ENCODE measurements at regions of chr7 and their contacts with region 1.

Region 1: DNA sequence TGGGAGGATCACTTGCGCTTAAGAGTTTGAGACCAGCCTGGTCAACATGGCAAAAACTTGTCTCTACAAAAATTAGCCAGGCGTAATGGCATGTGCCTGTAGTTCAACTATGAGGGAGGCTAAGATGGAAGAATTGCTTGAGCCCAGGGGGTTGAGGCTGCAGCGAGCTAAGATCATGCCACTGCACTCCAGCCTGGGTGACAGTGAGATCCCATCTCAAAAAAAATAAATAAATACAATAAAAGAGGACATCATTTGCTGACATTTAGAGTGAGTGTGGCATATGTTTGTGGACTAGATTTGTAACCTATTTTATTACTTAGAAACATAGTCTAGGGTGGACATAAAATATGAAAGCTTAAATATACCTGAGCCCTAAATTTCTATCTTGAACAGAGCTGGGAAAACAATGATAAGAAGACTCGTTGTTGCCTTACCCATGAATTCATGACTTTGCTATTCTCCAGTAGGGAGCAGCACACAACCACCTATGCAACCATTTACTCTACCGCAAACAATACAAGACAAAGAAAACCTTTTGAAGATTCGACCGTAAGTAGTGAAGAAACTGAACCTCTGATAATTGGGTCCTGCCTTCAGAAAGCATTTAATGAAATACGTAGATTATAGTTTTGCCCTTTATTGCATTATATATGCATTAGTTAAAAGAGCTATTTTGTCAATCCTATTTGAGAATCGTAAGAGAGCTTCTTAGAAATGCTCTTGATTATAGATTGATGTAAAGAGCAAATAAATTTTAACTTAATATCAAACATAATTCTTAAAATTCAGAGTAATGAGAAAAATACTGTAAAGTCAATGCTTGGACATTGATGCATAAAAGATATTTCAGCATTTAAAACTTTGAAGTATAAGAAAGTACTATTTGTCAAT is 83.5 kb downstream of the GNAT3 start:
- DNase-seq: peak; percentile 81
- H3K4me3 ChIP-seq: no peak overlapping the region
- H3K27ac ChIP-seq: no peak overlapping the region
- H3K4me1 ChIP-seq: no peaks in the 10 kb centered on the region
- H3K27me3 ChIP-seq: peaks cover 7% of the 10 kb centered on the region
- CTCF ChIP-seq: peak; percentile 78

Region 2: DNA sequence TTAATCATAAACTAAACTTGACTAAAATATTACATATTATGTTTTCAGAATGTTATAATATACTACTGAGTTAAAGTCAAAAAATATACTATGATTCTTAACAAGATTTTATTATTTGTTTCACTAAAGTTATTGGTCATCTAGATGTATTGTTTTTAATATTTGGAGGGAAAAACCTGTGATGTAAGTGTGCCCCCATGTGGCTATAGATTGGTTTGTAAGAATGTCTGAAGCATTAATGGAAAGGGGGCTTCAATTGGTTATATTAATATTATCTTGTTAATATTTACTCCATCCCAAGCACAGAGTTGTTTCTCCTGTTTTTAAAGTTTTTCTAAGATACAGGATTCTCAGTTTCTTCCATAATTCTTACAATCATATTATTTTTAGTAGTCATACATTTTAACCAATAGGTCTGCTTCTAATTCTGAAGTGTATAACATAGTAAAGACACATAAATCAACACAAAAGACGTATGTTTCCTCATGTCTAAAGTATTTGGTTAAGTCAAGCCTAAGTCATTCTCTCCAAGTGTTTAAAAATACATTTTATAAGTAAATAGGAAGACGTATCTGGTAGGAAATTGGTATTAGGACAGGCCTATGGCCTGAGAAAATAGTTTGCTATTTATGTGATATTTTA is 25.4 kb after region 1 on chr7:
- CTCF ChIA-PET with region 1: no interaction called
- POLR2A ChIA-PET with region 1: no interaction called
- intact Hi-C with region 1: loop called (anchors 2 kb)
- DNase-seq: peak; percentile 58
- H3K4me3 ChIP-seq: no peak overlapping the region
- H3K27ac ChIP-seq: no peak overlapping the region
- H3K4me1 ChIP-seq: no peaks in the 10 kb centered on the region
- H3K27me3 ChIP-seq: no peaks in the 10 kb centered on the region
- CTCF ChIP-seq: peak; percentile 70

Region 3: DNA sequence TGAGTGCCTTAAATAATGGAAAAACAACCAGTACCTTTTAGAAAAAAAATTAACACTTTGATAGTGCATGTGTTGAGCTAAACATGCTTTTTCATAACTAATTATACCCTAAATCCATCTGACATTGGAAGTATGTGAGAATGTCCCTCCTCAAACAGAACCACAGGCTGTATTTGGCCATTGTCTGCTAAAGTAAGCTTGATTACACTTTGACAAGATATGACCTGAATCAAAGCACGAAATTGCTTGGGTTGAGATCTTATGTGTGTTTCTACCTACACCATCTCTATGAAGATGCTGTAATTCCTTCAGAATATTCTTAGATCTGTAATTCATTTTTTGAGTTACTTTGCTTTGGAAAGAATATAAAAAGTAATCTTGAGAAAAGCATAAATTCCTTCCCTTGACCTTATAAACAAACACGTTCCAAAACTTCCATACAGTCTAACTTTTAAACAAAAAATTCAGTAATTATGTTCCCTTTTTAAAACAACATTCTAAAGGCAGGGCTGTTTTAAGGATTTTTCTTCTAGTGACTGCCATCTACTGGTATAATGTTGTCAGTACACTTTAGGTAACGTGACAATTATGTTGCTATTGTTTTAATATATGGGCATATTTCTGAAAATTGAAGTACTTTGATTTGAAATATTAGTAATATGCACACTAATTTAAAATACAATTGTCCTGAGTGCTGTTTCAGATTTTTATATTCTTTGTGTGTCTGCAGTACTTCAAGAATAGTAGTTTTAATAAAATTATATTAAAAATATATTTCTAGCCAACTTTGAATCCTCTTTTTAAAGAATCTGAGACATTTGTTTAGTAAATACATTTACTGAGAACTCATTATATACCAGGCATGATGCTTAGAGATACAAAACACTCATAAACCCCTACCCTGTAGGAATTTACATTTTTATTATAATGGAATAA is 231.0 kb after region 1 on chr7:
- CTCF ChIA-PET with region 1: interaction called, 4 read pairs
- POLR2A ChIA-PET with region 1: no interaction called
- intact Hi-C with region 1: loop called (anchors 2 kb)
- DNase-seq: peak; percentile 45
- H3K4me3 ChIP-seq: no peak overlapping the region
- H3K27ac ChIP-seq: no peak overlapping the region
- H3K4me1 ChIP-seq: no peaks in the 10 kb centered on the region
- H3K27me3 ChIP-seq: no peaks in the 10 kb centered on the region
- CTCF ChIP-seq: peak; percentile 78

Region 4: GRCh38 chr7:80681272-80681885 is 253.0 kb after region 1 on chr7:
- CTCF ChIA-PET with region 1: interaction called, 4 read pairs
- POLR2A ChIA-PET with region 1: no interaction called
- intact Hi-C with region 1: loop called (anchors 5 kb)
- DNase-seq: peak; percentile 48
- H3K4me3 ChIP-seq: no peak overlapping the region
- H3K27ac ChIP-seq: no peak overlapping the region
- H3K4me1 ChIP-seq: no peaks in the 10 kb centered on the region
- H3K27me3 ChIP-seq: no peaks in the 10 kb centered on the region
- CTCF ChIP-seq: peak; percentile 59

Region 5: DNA sequence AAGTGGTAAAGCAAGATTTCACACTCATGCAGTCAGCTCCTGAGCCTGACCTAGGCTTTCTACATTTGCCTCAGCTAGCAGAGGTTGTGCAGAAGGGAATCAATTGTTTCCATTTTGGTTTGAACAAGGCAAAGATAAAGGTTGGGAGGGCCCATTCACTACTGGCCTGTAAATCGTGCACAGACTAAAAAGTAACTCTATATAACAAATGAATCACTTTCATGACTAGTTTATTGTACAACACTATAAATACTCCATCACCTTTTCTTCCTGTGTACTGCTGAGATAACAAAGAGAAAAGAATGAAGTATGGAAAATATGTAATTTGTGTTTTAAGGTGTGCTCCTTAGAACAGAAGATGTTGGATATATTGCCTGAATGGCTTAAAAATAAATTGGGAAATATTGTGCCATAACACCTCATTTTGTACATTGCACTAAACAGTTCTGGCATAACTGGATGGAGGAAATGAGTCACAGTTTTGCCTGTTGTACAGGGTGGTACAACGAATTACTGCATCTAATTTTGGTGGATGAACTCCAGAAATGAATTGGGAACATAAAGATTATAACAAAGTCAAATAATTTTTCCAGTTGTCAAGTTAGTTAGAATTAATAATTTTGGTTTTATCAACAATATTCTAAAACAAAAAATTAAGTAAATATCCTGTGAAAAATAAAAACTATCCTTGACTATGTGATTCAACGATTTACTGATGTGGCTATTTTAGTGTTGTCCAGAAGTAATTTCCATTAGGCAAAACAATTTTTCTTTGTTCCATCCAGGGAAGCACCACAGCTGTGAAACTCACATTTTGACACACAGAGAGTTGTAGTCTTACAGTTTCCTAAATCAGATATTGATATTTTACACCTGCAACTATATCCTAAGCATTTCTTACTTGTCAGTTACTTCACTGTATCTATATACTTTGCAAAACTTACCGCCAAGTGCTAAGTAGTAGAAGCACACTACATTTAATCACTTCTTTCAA is 472.5 kb after region 1 on chr7:
- CTCF ChIA-PET with region 1: no interaction called
- POLR2A ChIA-PET with region 1: no interaction called
- intact Hi-C with region 1: loop called (anchors 10 kb)
- DNase-seq: peak; percentile 60
- H3K4me3 ChIP-seq: no peak overlapping the region
- H3K27ac ChIP-seq: no peak overlapping the region
- H3K4me1 ChIP-seq: peaks cover 15% of the 10 kb centered on the region
- H3K27me3 ChIP-seq: no peaks in the 10 kb centered on the region
- CTCF ChIP-seq: no peak

Region 6: GRCh38 chr7:81469869-81470723 is 1041.7 kb after region 1 on chr7:
- CTCF ChIA-PET with region 1: interaction called, 3 read pairs
- POLR2A ChIA-PET with region 1: no interaction called
- intact Hi-C with region 1: loop called (anchors 5 kb)
- DNase-seq: peak; percentile 80
- H3K4me3 ChIP-seq: no peak overlapping the region
- H3K27ac ChIP-seq: no peak overlapping the region
- H3K4me1 ChIP-seq: no peaks in the 10 kb centered on the region
- H3K27me3 ChIP-seq: no peaks in the 10 kb centered on the region
- CTCF ChIP-seq: peak; percentile 78

Measured in A673 (cell line).